ENCODE measurements at regions of chr5 and their contacts with region 1.

Region 1: DNA sequence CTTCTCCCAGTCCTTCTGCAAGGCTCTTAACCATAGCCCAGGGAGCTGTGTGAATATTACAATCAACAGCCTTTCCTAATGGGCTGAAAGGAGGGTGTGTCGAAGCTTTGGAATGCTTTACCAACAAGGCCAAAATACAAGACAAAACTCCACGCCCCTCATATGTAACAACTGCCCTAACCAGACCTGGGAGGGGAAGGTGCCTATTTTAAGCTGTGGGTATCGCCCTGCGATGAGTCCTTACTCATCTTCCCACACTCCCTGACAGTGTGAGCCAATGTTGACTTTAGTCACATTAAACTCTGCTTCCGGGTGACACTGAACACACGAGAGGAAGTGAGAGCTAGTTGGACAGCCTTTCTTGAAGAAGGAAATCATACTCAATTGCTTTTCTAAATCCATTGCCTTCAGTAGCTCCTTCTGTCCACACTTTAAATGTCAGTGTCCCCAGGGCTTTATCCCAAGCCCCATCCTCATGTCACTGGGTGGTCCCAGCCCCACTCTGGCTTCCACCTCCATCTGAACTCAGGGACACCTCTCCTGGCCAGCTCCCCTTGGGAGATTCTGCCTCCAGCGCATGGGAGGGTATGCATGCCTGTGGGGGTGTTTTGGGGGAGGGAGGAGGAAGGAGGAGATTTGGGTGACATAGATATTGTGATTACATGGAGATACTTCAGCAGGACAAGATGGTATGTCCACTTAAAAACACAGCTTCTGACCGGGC is 6.5 kb upstream of the TBC1D9B start:
- DNase-seq: peak in 1 of 2 donors; percentile 54
- ATAC-seq: peak; percentile 97

Region 2: GRCh38 chr5:180071531-180072255 is 157.5 kb after region 1 on chr5 and contains the start of gene RNF130:
- intact Hi-C with region 1: loop called in 1 of 2 experiments (anchors 10 kb)
- DNase-seq: peak; percentile 91 to 94
- ATAC-seq: peak; percentile 93
- total RNA-seq, gene RNF130: 39.7 to 52.1 TPM